Stomach (tissue), 19 donors: ENCODE measurements at regions of chr3 and their contacts with region 1.

Region 1: DNA sequence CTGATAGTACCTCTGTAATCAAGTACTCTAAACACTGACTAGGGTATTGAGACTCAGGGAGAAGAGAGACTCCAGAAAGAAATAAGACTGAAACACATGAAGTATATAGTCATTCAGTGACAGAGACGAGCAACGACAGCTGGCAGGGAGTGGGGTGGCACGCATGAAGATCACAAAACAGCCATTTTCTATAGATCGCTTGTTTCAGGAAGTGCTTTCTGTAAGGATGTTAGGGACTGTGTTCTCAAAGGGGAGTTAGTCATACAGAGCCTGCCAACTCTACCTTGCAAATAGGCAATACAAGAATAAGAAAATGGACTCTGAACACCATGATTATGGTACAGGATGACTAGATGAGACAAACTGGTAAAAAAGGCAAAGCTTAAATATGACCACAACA is 139.5 kb downstream of the TBL1XR1 start:
- DNase-seq: peak in 1 of 2 donors; percentile 21
- H3K4me3 ChIP-seq: no peak overlapping the region
- H3K27ac ChIP-seq: no peak overlapping the region
- H3K4me1 ChIP-seq: peaks cover 4 to 58% (median 32%) of the 10 kb centered on the region in 4 donors
- H3K27me3 ChIP-seq: no peaks in the 10 kb centered on the region
- CTCF ChIP-seq: no peak
- EP300 ChIP-seq: no peak
- POLR2A ChIP-seq: no peak

Region 2: DNA sequence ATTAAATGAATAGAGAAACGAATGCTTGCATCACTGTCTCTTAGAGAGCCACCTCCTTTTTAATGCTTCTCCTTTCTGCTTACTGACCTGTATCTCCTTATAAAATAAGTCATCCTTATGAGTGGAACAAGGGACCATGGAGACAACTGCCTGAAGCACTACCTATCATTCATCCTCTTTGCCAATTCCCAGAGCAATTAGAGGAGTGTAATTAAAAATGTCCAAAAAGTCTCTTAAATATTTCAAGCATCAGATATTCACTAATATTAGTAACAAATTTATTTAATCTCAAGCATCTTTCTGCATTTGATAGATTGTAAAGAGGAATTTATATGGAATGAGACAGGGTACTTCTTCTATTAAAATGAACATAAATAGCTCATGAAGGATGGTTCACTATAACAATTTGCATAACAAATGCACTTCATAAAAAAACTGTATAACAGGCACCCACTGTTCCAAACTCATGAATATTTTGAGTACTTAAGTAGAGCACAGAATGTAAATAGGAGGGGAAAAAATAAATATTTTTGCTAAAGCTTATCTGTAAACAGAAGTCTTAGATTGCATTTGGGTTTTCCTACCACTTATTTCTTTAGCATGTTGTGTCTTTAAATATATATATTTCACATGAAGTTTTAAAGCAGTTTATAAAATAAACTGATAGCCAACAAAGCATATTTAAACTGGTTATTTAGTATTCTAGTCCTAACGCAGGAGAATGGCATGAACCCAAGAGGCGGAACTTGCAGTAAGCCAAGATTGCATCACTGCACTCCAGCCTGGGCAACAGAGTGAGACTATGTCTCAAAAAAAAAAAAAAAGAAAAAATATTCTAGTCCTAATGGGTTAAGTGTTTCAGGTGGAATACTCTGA is 129.8 kb before region 1 on chr3:
- intact Hi-C with region 1: no loop called
- DNase-seq: no peak
- H3K4me3 ChIP-seq: no peak overlapping the region
- H3K27ac ChIP-seq: no peak overlapping the region
- H3K4me1 ChIP-seq: no peaks in the 10 kb centered on the region
- H3K27me3 ChIP-seq: no peaks in the 10 kb centered on the region
- CTCF ChIP-seq: no peak
- EP300 ChIP-seq: no peak
- POLR2A ChIP-seq: no peak

Region 3: DNA sequence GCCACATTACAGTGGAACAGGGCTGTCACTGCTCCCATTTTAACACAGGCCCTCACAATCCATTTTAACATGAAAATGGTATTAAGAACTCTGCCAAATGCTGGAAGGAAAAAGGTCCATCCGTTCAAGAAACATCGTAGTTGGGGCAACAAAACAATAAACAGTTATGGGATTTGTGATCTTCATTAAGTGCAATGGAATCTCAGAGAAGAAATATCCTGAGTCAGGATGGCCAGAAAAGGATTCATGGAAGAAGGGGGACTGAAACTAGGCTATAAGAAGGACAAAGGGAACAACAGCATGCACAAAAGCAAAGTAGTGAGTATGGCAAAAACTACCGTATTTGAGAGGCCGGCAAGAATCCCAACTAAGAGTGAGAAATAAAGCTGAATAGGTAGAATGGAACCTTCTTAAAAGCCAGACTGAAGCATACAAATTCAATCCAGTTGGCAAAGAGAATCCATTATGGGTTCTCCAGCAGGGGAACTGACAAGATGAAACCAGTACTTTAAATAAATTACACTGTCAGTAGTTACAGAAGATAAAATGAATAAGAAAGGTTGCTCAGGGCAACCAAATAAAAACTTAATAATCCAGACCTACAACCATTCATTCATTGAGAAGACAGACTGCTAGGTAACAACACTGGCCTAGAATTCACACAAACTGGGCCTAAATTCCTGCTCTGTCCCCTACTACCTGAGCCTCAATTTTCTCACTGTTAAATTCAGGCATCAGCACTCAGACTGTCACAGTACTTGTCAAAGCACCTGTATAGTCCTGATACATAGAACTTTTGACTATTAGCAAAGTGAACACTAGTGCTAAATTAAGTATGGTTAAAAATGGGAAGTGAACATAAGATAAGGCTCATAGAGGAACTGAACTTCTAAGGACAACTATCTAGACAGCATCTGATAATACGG is 133.3 kb after region 1 on chr3:
- intact Hi-C with region 1: loop called (anchors 5 kb)
- DNase-seq: peak in 1 of 2 donors; percentile 46
- H3K4me3 ChIP-seq: no peak overlapping the region
- H3K27ac ChIP-seq: peak overlapping the region in 3 of 5 donors; percentile 15 to 49 (median 41)
- H3K4me1 ChIP-seq: peaks cover 16 to 80% (median 47%) of the 10 kb centered on the region in 4 donors
- H3K27me3 ChIP-seq: no peaks in the 10 kb centered on the region
- CTCF ChIP-seq: no peak
- EP300 ChIP-seq: no peak
- POLR2A ChIP-seq: no peak